Activated CD8-positive, alpha-beta memory T cell treated with anti-CD3 and anti-CD28 coated beads, Interleukin-2, amount 10 ng/mL, durations not matched to agents 7 days and 5 days (primary cell): ENCODE measurements at regions of chr15 and their contacts with region 1.

Region 1: GRCh38 chr15:45205192-45205591 is 17.4 kb upstream of the SHF start:
- DNase-seq: peak; percentile 81
- ATAC-seq: peak; percentile 35
- H3K4me3 Mint-ChIP-seq: no peak overlapping the region
- H3K27ac Mint-ChIP-seq: no peak overlapping the region
- H3K4me1 Mint-ChIP-seq: peaks cover 5% of the 10 kb centered on the region
- H3K27me3 Mint-ChIP-seq: peaks cover 26% of the 10 kb centered on the region

Region 2: GRCh38 chr15:45048794-45049631 is 156.2 kb before region 1 on chr15:
- CTCF ChIA-PET with region 1: no interaction called
- DNase-seq: no peak
- ATAC-seq: no peak
- H3K4me3 Mint-ChIP-seq: no peak overlapping the region
- H3K27ac Mint-ChIP-seq: no peak overlapping the region
- H3K4me1 Mint-ChIP-seq: no peaks in the 10 kb centered on the region
- H3K27me3 Mint-ChIP-seq: no peaks in the 10 kb centered on the region

Region 3: DNA sequence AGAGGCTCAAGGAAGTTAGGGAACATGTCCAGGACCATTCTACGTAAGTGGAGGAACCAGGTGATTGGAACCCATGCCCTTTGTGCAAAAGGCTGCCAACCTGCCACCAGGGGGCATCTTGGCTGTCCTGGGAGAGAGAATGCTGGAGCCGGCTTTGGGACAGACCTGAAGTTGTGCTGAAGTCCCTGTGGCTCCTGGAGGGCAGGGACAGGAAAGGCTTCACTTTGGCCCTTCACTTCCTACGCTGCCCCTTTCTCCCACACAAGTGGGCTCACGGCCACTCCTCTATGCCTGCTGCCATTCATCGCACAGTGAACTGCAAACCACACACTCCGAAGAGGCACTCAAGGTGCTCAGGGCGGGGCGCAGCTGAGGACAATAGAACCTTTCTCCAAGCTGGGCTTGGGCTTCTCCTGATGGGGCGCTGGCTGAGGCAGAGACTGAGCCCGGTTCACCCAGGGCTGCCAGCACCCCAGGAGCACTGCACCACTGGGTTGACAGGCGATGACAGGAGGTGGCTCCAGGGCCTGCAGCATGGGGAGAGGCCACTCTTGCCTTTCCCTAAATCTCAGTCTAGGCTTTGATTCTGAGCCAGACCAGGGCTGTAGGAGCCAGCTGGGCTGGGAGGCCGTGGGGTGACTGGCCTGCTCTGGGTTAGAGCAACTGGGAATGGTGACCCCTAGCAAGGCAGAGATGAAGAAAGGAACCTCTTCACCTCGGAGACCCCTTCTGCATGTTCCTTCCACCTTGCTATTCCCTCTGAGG is 25.8 kb before region 1 on chr15:
- CTCF ChIA-PET with region 1: interaction called, 25 read pairs
- DNase-seq: peak; percentile 54
- ATAC-seq: no peak
- H3K4me3 Mint-ChIP-seq: no peak overlapping the region
- H3K27ac Mint-ChIP-seq: no peak overlapping the region
- H3K4me1 Mint-ChIP-seq: peaks cover 17% of the 10 kb centered on the region
- H3K27me3 Mint-ChIP-seq: no peaks in the 10 kb centered on the region

Region 4: DNA sequence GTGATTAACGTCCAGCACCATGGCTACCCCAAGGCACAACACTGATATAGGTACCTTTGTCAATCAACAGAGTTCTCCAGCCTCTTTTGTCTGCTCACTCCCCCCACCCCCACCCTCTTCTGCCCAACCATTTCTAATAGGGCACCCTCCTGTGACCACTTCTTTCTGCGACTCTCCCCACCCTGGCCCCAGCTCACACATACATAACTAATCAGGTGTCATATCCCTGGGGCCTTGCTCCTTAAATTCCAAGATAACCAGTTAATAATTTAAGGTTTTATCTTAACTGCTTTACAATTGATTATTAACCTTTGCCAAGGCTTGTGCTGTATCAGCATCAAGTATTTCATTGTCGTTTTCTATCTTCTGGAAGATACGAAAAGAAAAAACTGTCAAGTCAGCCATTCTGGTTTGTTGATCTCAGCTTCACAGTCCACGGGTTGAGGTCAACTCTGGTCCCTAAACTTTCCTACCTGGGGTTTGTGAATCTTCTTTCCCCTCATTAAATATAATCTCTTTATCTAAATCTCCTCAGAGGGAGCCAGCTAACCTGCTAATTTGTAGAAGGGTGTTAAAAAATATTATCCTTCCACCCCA is 19.5 kb after region 1 on chr15:
- CTCF ChIA-PET with region 1: interaction called, 11 read pairs
- DNase-seq: no peak
- ATAC-seq: no peak
- H3K4me3 Mint-ChIP-seq: no peak overlapping the region
- H3K27ac Mint-ChIP-seq: no peak overlapping the region
- H3K4me1 Mint-ChIP-seq: no peaks in the 10 kb centered on the region
- H3K27me3 Mint-ChIP-seq: peaks cover 22% of the 10 kb centered on the region

Region 5: GRCh38 chr15:45395943-45396342 is 190.8 kb after region 1 on chr15:
- CTCF ChIA-PET with region 1: interaction called, 19 read pairs
- DNase-seq: no peak
- ATAC-seq: no peak
- H3K4me3 Mint-ChIP-seq: no peak overlapping the region
- H3K27ac Mint-ChIP-seq: no peak overlapping the region
- H3K4me1 Mint-ChIP-seq: peaks cover 7% of the 10 kb centered on the region
- H3K27me3 Mint-ChIP-seq: peaks cover 13% of the 10 kb centered on the region